ENCODE measurements at regions of chr2 and their contacts with region 1.

Region 1: DNA sequence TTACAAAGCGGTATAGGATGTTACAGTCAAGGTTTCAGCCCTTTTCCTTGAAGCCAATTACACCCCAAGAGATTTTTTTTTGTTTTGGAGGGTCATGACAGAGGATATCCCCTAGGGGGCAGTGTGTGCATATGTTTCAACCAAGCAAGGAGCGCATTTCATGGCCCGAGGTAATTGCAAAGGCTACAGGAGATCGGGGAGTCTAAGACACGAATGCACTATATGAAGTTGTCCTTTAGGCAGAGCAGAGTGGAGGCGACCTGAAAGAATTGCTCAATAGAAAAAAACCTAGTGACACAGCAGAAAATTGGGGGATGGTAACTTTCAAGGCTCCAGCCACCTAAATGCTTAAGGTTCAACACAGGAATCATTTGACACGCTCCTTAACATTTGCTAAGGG is 219.8 kb upstream of the PARD3B start:
- DNase-seq: peak; percentile 55
- H3K4me3 Mint-ChIP-seq: no peak overlapping the region
- H3K27ac Mint-ChIP-seq: no peak overlapping the region
- H3K4me1 Mint-ChIP-seq: peaks cover 5% of the 10 kb centered on the region
- H3K27me3 Mint-ChIP-seq: peaks cover 14% of the 10 kb centered on the region

Region 2: DNA sequence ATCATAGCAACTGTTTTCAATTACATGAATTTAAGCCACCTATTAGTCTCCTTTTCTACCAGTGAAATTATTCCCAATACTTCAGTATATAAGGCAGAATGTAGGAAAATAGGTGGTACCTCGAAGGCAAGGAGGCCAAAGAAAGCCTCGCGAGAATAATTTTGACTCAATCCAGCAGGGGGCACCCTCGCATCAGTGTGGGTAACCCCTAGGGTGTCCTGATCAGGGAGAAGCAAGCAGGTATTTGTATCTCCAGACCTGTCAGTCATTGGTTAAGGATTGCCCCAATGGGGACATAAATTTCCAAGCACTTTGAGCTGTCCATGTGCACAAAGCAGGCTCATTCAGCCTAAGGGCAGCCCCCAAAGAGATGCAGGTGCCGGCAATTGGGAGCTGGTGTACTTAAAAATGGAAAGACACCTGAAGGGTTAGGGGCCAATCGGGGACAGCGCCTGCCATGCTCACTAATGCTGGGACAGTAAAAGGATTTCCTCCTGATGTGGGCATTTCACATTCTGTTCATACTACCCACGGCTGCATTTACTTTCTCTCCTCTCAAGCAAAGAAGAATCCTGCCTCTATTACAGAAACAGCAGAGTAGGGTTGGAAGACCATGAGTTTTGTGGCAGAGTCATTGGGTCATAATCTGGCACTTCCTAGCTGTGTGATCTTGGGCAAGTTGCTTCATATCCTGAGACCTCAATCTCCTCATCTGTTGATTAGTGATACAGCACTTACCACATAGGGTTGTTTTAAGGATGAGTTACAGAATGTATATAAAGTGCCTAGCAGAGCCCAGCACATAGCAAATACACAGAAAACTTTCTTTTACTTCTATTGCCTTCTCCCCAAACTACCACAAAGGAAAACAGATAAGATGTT is 252.8 kb before region 1 on chr2:
- intact Hi-C with region 1: loop called (anchors 10 kb)
- DNase-seq: peak; percentile 44
- H3K4me3 Mint-ChIP-seq: no peak overlapping the region
- H3K27ac Mint-ChIP-seq: no peak overlapping the region
- H3K4me1 Mint-ChIP-seq: peaks cover 13% of the 10 kb centered on the region
- H3K27me3 Mint-ChIP-seq: no peaks in the 10 kb centered on the region

Region 3: GRCh38 chr2:204691911-204692510 is 366.5 kb after region 1 on chr2:
- intact Hi-C with region 1: loop called (anchors 1 kb)
- DNase-seq: no peak
- H3K4me3 Mint-ChIP-seq: no peak overlapping the region
- H3K27ac Mint-ChIP-seq: no peak overlapping the region
- H3K4me1 Mint-ChIP-seq: peaks cover 11% of the 10 kb centered on the region
- H3K27me3 Mint-ChIP-seq: peaks cover 3% of the 10 kb centered on the region

Region 4: GRCh38 chr2:205766779-205767359 is 1441.4 kb after region 1 on chr2:
- intact Hi-C with region 1: loop called (anchors 5 kb)
- DNase-seq: peak; percentile 17
- H3K4me3 Mint-ChIP-seq: no peak overlapping the region
- H3K27ac Mint-ChIP-seq: no peak overlapping the region
- H3K4me1 Mint-ChIP-seq: no peaks in the 10 kb centered on the region
- H3K27me3 Mint-ChIP-seq: peaks cover 42% of the 10 kb centered on the region

Region 5: DNA sequence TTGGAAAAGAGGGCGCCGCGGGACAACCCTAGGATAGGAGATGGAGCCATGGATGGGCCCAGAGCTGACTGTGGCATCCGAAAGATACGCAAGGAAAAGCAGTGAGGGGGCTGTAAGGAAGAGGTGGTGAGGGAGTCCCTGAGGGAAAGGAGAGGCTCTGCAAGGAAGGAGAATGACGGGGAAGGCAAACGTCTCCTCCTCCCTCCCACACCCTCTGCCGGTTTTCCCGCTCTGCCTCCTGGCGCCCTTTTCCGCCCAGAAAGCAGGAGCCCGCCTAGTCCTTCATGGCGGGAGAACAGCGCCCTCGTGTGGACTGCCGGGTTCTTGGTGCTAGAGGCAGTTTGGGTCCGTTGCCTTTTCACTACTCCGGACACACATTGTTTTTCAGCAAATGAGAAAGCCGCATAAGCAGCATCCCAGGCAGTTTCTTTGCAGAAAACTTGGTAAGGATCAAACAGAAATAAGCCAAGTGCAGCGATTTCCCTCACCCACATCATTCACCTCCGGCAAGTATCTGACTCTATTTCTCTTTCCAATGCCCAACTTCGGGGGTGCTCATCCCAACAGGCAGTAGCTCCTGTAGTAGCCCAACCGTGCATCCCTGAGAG is 1560.1 kb after region 1 on chr2:
- intact Hi-C with region 1: loop called (anchors 1 kb)
- DNase-seq: peak; percentile 37
- H3K4me3 Mint-ChIP-seq: no peak overlapping the region
- H3K27ac Mint-ChIP-seq: no peak overlapping the region
- H3K4me1 Mint-ChIP-seq: peaks cover 8% of the 10 kb centered on the region
- H3K27me3 Mint-ChIP-seq: peaks cover 10% of the 10 kb centered on the region

Region 6: DNA sequence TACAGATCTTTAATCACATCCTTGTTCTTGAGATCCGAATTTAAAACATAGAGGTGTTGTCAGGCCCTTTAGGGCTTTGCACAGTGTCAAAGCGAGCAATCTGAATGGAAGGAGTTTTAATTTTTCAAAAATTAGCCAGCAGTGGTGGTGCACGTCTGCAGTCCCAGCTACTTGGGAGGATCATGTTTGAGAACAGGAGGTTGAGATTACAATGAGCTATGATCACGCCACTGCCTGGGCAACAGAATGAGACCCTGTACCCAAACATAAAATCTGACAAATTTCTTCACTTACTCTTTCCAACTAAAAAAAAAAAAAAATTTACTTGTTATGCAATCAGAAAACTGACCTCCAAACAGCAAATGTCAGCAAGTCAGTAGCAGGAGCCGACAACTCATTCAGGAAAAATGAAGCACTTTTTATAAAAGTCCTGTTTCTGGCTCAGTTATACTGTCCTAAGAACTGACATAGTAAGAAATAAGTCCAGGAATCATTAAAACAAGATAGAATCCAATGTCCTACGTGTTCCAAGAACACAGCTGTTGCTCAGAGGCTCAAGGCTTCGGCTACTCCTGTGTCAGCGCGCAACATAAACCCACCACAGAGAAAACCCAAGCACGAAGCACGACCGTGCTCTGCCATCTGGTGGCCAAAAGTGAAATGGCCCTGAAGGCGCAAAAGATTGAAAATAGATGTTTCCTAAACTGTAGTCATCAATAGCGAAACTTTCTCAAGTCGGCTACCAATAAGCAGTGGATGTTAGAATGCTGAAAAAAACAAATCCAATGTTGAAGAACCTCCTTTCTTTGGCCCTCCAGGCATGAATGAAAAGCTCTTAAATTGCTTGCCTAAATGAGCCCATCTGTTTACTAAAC is 1622.4 kb after region 1 on chr2:
- intact Hi-C with region 1: loop called (anchors 1 kb)
- DNase-seq: peak; percentile 16
- H3K4me3 Mint-ChIP-seq: no peak overlapping the region
- H3K27ac Mint-ChIP-seq: no peak overlapping the region
- H3K4me1 Mint-ChIP-seq: peaks cover 7% of the 10 kb centered on the region
- H3K27me3 Mint-ChIP-seq: peaks cover 7% of the 10 kb centered on the region